Ovary (tissue), 10 donors: ENCODE measurements at regions of chr3 and their contacts with region 1.

Region 1: GRCh38 chr3:111702996-111703985 is 108.1 kb upstream of the ZBED2 start:
- DNase-seq: no peak
- H3K4me3 ChIP-seq: no peak overlapping the region
- H3K27ac ChIP-seq: no peak overlapping the region
- H3K4me1 ChIP-seq: no peaks in the 10 kb centered on the region
- H3K27me3 ChIP-seq: no peaks in the 10 kb centered on the region
- CTCF ChIP-seq: no peak
- EP300 ChIP-seq: no peak
- POLR2A ChIP-seq: no peak

Region 2: DNA sequence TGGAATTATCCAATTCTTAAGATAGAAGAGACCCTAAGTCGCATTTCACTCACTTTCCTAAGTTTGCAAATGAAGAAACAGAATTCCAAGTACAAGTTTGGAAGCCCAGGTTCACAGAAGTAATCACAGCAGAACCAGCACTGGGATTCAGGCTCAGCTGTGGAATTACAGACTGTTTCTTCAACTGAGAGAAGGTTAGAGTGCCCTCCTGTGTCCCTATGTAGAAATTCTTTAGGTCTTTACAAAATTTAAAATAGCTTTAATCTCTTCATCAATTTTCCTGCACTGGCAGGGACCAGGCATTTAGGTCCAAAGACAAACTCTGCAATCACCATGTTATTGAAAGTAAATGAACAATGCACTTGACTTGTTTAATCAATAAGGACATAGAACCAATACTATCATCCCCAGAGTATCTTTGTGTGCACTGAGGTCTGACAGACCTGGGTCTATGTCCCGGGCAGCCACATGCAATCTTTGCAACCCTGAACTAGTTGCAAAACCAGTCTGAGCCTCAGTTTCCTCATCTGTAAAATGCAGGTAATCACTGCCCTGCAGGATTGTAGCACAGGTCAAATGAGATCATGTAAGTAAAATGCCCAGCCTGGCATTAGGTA is 11.9 kb before region 1 on chr3:
- intact Hi-C with region 1: loop called in 1 of 4 experiments (anchors 2 kb)
- DNase-seq: no peak
- H3K4me3 ChIP-seq: no peak overlapping the region
- H3K27ac ChIP-seq: no peak overlapping the region
- H3K4me1 ChIP-seq: no peaks in the 10 kb centered on the region
- H3K27me3 ChIP-seq: no peaks in the 10 kb centered on the region
- CTCF ChIP-seq: no peak
- EP300 ChIP-seq: no peak
- POLR2A ChIP-seq: no peak